Activated B cell treated with CpG ODN at 0.5 μM for 24 hours (primary cell): ENCODE measurements at regions of chr12 and their contacts with region 1.

Region 1: GRCh38 chr12:751192-751998 is 984 bp upstream of the WNK1 start:
- DNase-seq: peak; percentile 78
- ATAC-seq: peak; percentile 47
- H3K4me3 Mint-ChIP-seq: no peak overlapping the region
- H3K27ac Mint-ChIP-seq: no peak overlapping the region
- H3K4me1 Mint-ChIP-seq: peaks cover 24% of the 10 kb centered on the region
- H3K27me3 Mint-ChIP-seq: no peaks in the 10 kb centered on the region
- CTCF ChIP-seq: no peak

Region 2: GRCh38 chr12:292186-292585 is 459.2 kb before region 1 on chr12:
- CTCF ChIA-PET with region 1: no interaction called
- POLR2A ChIA-PET with region 1: no interaction called
- intact Hi-C with region 1: no loop called
- DNase-seq: no peak
- ATAC-seq: no peak
- H3K4me3 Mint-ChIP-seq: no peak overlapping the region
- H3K27ac Mint-ChIP-seq: no peak overlapping the region
- H3K4me1 Mint-ChIP-seq: peaks cover 5% of the 10 kb centered on the region
- H3K27me3 Mint-ChIP-seq: no peaks in the 10 kb centered on the region
- CTCF ChIP-seq: no peak

Region 3: DNA sequence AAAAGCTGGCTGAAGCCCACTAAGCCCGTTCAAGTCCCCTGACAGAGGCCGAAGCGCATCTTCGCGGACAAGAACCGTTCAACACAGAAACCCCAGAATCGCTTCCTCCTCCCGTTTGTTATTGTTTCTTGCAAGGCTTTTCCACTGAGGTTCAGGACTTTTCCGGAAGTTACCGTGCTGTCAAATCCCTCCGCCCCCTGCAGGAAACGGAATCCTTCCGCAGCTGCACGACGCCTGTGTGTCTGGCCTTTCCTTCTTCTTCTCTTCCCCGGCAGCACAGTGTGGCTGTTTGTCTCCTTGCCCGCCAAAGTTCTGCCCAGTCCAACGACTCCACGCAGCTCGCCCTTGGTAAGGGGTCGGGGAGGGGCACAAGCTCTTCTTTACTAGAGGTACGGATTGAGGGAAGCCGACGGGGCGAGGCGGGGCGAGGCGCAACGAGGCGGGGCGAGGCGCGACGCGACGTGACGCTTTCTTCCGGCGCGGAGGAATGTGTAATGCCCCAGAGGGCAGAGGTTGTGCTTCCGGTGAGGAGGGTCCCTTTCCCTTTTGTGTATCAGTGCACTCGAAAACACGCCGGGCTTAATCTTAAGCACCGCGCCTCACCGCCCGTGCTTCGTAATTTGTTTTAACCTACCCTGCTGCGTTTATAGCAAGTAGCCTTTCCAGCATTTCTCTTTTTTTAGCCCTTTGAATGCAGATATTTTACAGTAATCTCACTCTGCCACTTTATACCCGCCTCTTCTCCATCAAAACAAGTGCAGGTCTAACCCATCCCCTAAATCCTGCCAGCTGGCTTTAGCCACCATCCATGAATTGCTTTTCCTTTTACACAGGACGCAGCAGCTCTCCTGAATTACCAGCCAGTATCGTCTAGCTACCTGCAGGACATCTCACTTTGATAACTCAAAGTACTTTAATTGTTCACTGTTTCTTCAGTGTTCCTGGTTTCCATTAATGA is 362.0 kb before region 1 on chr12 and contains the start of gene KDM5A:
- CTCF ChIA-PET with region 1: no interaction called
- POLR2A ChIA-PET with region 1: no interaction called
- intact Hi-C with region 1: loop called (anchors 1 kb)
- DNase-seq: peak; percentile 83
- ATAC-seq: peak; percentile 92
- H3K4me3 Mint-ChIP-seq: peak within 1 kb of the TSS; percentile 95
- H3K27ac Mint-ChIP-seq: peak within 1 kb of the TSS; percentile 97
- H3K4me1 Mint-ChIP-seq: peaks cover 46% of the 10 kb centered on the region
- H3K27me3 Mint-ChIP-seq: no peaks in the 10 kb centered on the region
- CTCF ChIP-seq: no peak
- total RNA-seq, gene KDM5A: 113 and 135 TPM in 2 replicates

Region 4: DNA sequence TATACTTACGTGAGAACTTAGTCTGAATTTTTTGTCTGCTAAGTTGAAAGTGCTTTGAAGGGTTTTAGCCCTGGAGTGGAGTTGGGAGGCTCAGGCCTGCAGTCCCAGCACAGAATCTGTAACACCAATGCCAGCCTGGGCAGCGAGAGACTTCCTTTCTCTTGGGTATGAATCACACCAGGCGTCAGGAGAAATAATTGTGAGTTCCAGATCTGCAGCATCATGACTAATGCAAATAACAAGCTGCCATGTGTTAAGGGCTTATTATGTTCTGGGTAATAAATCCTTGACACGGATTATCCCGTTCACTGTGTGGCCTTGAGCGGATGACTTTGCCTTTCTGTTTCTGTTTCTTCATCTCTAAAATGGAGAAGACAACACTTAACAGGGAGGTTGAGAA is 221.1 kb before region 1 on chr12:
- CTCF ChIA-PET with region 1: no interaction called
- POLR2A ChIA-PET with region 1: no interaction called
- intact Hi-C with region 1: no loop called
- DNase-seq: no peak
- ATAC-seq: no peak
- H3K4me3 Mint-ChIP-seq: no peak overlapping the region
- H3K27ac Mint-ChIP-seq: no peak overlapping the region
- H3K4me1 Mint-ChIP-seq: no peaks in the 10 kb centered on the region
- H3K27me3 Mint-ChIP-seq: peaks cover 5% of the 10 kb centered on the region
- CTCF ChIP-seq: no peak

Region 5: GRCh38 chr12:614411-614970 is 136.9 kb before region 1 on chr12:
- CTCF ChIA-PET with region 1: interaction called, 87 read pairs
- POLR2A ChIA-PET with region 1: interaction called, 46 read pairs
- intact Hi-C with region 1: loop called (anchors 1 kb)
- DNase-seq: peak; percentile 38
- ATAC-seq: peak; percentile 73
- H3K4me3 Mint-ChIP-seq: no peak overlapping the region
- H3K27ac Mint-ChIP-seq: no peak overlapping the region
- H3K4me1 Mint-ChIP-seq: peaks cover 25% of the 10 kb centered on the region
- H3K27me3 Mint-ChIP-seq: no peaks in the 10 kb centered on the region
- CTCF ChIP-seq: no peak

Region 6: DNA sequence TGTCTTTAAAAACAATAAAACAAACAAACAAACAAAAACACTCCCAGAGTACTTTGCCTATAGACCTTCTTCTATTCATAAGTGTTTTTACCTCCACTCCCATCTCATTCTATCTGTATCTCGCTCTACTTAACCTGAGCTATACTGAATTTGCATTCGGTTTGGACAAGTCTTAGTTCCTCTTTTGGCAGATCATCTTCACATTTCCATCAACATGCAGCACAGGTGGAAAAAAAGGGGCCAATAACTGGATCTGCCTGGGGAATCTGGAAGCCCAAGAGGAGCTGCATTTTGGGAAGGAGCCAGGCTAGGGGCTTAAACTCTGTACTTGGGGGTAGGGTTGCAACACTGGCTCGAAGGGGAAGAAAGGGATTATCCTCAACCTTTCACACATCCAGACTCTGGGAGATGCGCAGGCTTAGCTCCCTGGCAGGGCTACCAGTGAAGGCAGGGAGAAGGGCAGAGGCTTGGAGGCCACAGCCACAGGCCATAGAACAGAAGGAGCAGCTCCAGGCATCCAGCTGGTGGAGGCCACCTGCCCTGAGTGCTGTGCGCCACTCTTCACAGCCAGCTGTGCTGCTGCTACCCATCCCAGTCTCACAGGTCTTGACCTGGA is 92.2 kb before region 1 on chr12:
- CTCF ChIA-PET with region 1: interaction called, 4 read pairs
- POLR2A ChIA-PET with region 1: interaction called, 12 read pairs
- intact Hi-C with region 1: no loop called
- DNase-seq: no peak
- ATAC-seq: peak; percentile 90
- H3K4me3 Mint-ChIP-seq: peak overlapping the region; percentile 1
- H3K27ac Mint-ChIP-seq: peak overlapping the region; percentile 1
- H3K4me1 Mint-ChIP-seq: peaks cover 31% of the 10 kb centered on the region
- H3K27me3 Mint-ChIP-seq: no peaks in the 10 kb centered on the region
- CTCF ChIP-seq: no peak

Region 7: GRCh38 chr12:685388-685787 is 66.0 kb before region 1 on chr12:
- CTCF ChIA-PET with region 1: interaction called, 19 read pairs
- POLR2A ChIA-PET with region 1: interaction called, 32 read pairs
- intact Hi-C with region 1: loop called (anchors 1 kb)
- DNase-seq: peak; percentile 64
- ATAC-seq: peak; percentile 79
- H3K4me3 Mint-ChIP-seq: peak overlapping the region; percentile 62
- H3K27ac Mint-ChIP-seq: peak overlapping the region; percentile 99
- H3K4me1 Mint-ChIP-seq: peaks cover 50% of the 10 kb centered on the region
- H3K27me3 Mint-ChIP-seq: no peaks in the 10 kb centered on the region
- CTCF ChIP-seq: no peak

Region 8: DNA sequence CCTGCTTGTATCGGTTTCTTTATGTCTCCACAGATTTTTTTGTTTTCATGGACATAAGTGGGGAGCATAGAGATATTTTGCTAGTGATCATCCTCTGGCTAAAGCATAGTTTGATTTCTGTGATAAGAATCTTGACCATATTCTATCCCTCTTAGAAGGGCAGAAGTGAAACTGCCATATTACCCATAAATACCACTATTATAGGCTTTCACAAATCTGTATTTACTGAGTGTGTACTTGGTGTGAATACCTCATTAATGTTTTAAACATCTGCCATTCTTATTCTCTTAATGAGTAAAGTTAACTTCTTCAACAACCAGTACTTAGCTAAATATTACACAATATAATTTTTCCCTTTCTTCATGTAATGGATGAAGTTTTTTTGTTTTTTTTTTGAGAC is 17.0 kb after region 1 on chr12:
- CTCF ChIA-PET with region 1: no interaction called
- POLR2A ChIA-PET with region 1: interaction called, 7 read pairs
- intact Hi-C with region 1: loop called (anchors 2 kb)
- DNase-seq: no peak
- ATAC-seq: no peak
- H3K4me3 Mint-ChIP-seq: no peak overlapping the region
- H3K27ac Mint-ChIP-seq: no peak overlapping the region
- H3K4me1 Mint-ChIP-seq: peaks cover 59% of the 10 kb centered on the region
- H3K27me3 Mint-ChIP-seq: no peaks in the 10 kb centered on the region
- CTCF ChIP-seq: no peak

Region 9: GRCh38 chr12:795305-795704 is 43.9 kb after region 1 on chr12:
- CTCF ChIA-PET with region 1: no interaction called
- POLR2A ChIA-PET with region 1: no interaction called
- intact Hi-C with region 1: no loop called
- DNase-seq: no peak
- ATAC-seq: peak; percentile 81
- H3K4me3 Mint-ChIP-seq: peak overlapping the region; percentile 55
- H3K27ac Mint-ChIP-seq: peak overlapping the region; percentile 81
- H3K4me1 Mint-ChIP-seq: peaks cover 65% of the 10 kb centered on the region
- H3K27me3 Mint-ChIP-seq: no peaks in the 10 kb centered on the region
- CTCF ChIP-seq: no peak

Region 10: GRCh38 chr12:990661-991349 is 239.4 kb after region 1 on chr12 and contains the start of gene ERC1:
- CTCF ChIA-PET with region 1: no interaction called
- POLR2A ChIA-PET with region 1: no interaction called
- intact Hi-C with region 1: loop called (anchors 2 kb)
- DNase-seq: peak; percentile 94
- ATAC-seq: peak; percentile 89
- H3K4me3 Mint-ChIP-seq: peak within 1 kb of the TSS; percentile 95
- H3K27ac Mint-ChIP-seq: peak within 1 kb of the TSS; percentile 91
- H3K4me1 Mint-ChIP-seq: peaks cover 29% of the 10 kb centered on the region
- H3K27me3 Mint-ChIP-seq: no peaks in the 10 kb centered on the region
- CTCF ChIP-seq: no peak
- total RNA-seq, gene ERC1: 51.1 and 57.0 TPM in 2 replicates